Activated CD8-positive, alpha-beta T cell treated with anti-CD3 and anti-CD28 coated beads, Interleukin-2, amount 10 ng/mL, durations not matched to agents 7 days and 5 days (primary cell): ENCODE measurements at regions of chr20 and their contacts with region 1.

Region 1: GRCh38 chr20:54199721-54200176 is 8.1 kb upstream of the PFDN4 start:
- DNase-seq: peak; percentile 77
- ATAC-seq: peak; percentile 55
- H3K4me3 Mint-ChIP-seq: no peak overlapping the region
- H3K27ac Mint-ChIP-seq: no peak overlapping the region
- H3K4me1 Mint-ChIP-seq: no peaks in the 10 kb centered on the region
- H3K27me3 Mint-ChIP-seq: peaks cover 12% of the 10 kb centered on the region

Region 2: DNA sequence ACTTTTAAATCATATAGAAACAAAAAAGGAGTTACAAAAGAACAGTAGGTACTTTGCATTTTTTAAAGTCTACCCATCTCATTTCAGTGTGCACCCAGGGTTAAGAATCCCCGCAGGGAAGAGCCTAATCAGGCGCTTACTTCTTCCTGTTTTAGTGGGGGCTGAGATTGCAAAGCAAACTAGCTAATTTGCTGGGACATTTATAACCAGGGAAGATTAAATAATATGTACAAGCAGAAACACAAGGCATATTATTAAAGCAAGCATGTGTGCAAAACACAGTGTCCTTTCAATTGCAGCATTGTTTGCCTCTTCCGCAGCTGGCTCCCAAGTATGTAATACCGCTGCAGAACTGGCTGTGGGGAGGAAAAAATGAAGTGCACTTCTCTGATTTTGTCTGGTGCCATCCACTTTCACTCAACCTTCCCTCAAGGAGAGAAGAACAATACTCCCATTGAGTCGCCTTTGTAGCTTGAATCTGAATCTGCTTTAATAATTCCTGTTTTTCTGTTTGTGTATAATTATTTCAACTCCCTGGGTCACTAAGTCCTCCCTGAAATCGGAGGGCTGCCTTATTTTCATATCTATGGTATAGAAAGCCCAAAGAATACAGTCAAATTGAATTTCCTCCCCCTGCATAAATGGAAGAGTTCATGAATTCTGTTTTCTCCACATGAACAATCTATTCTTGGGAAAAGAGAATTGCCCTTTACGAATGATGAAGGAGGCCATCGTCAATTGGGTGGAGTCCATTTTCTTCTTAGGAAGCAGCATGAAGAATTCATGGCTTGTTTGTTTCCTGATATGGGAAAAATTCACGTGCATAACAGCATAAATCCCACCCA is 106.1 kb before region 1 on chr20:
- CTCF ChIA-PET with region 1: interaction called, 91 read pairs
- POLR2A ChIA-PET with region 1: no interaction called
- DNase-seq: no peak
- ATAC-seq: no peak
- H3K4me3 Mint-ChIP-seq: no peak overlapping the region
- H3K27ac Mint-ChIP-seq: no peak overlapping the region
- H3K4me1 Mint-ChIP-seq: peaks cover 5% of the 10 kb centered on the region
- H3K27me3 Mint-ChIP-seq: peaks cover 13% of the 10 kb centered on the region

Region 3: GRCh38 chr20:54179946-54180345 is 19.8 kb before region 1 on chr20:
- CTCF ChIA-PET with region 1: interaction called, 15 read pairs
- POLR2A ChIA-PET with region 1: no interaction called
- DNase-seq: no peak
- ATAC-seq: no peak
- H3K4me3 Mint-ChIP-seq: no peak overlapping the region
- H3K27ac Mint-ChIP-seq: no peak overlapping the region
- H3K4me1 Mint-ChIP-seq: no peaks in the 10 kb centered on the region
- H3K27me3 Mint-ChIP-seq: peaks cover 26% of the 10 kb centered on the region